ENCODE measurements at regions of chr4 and their contacts with region 1.

Region 1: DNA sequence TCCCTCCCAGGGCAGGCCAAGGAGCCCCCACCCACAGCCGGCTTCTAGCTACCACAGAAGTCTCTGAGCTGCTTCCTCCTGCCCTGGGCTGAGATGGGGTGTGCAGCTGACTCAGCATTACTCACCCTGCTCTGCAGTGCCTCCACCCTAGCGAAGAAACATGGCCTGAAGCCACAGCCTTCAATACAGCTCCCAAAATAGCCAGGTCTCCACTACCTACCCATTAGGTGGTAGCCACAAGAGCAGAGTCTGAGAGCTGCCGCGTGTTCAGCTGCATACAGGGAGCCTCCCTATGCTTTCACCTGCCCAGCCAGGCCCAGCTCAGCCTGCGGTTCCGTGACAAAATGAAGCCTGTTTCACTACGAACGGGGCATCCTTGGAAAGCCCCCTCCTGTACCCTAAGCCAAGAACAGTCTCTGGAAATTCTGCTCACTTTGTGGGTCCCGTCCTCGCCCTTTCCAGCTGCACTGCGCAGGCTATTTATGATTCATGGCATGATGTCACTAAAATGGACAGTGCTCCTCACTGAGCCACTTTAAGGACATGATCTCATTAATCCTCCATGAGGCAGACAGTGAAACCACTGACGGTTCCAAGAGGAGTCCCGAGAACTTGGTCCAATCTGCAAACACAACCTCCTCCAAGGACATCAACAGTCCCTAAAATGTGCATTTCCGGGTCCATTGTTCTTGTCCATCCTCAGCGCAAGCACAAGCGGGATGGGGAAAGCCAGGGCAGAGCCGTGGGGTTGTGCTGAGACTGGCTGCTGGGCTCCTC is 20.2 kb downstream of the WDR1 start:
- DNase-seq: peak; percentile 92
- ATAC-seq: peak; percentile 84
- H3K4me3 Mint-ChIP-seq: peak overlapping the region; percentile 7
- H3K27ac Mint-ChIP-seq: peak overlapping the region; percentile 92
- H3K4me1 Mint-ChIP-seq: peaks cover 97% of the 10 kb centered on the region
- H3K27me3 Mint-ChIP-seq: no peaks in the 10 kb centered on the region

Region 2: GRCh38 chr4:9691238-9692065 is 404.9 kb before region 1 on chr4:
- CTCF ChIA-PET with region 1: no interaction called
- POLR2A ChIA-PET with region 1: no interaction called
- intact Hi-C with region 1: loop called in 1 of 2 experiments (anchors 5 kb)
- DNase-seq: peak; percentile 95
- ATAC-seq: peak; percentile 100
- H3K4me3 Mint-ChIP-seq: peak overlapping the region; percentile 76
- H3K27ac Mint-ChIP-seq: peak overlapping the region; percentile 76
- H3K4me1 Mint-ChIP-seq: peaks cover 23% of the 10 kb centered on the region
- H3K27me3 Mint-ChIP-seq: no peaks in the 10 kb centered on the region

Region 3: DNA sequence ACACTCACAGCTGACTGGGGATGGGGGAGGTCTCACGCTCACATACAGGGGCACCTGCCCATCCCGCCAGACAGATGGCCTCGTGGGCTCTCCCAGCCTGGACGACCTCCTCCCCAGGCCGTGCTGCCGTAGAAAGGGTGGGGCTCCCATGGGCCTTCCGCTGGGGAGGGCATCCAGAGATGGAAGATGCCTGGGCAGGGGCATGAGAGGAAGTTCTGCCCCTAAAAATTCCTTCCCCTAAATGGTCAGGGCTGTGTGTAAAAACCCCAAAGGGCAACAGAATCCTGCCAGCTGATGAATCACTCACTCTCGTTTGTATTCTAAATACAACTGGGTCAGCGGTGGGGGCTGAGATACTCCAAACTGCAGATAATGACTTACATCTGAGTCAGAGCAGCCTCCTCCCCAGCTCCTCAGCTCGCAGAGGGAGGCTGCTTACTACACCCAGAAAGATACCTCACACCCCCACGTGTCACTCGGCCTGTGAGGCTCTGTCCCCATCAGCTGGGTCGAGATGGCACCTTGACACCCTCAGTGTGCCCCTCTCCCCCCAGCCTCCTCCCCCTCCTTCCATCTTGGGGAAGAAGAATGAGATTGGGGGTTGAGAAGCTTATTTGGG is 10.1 kb after region 1 on chr4:
- CTCF ChIA-PET with region 1: interaction called, 8 read pairs
- POLR2A ChIA-PET with region 1: interaction called, 9 read pairs
- intact Hi-C with region 1: loop called (anchors 1 kb)
- DNase-seq: peak; percentile 91
- ATAC-seq: peak; percentile 92
- H3K4me3 Mint-ChIP-seq: peak overlapping the region; percentile 67
- H3K27ac Mint-ChIP-seq: peak overlapping the region; percentile 87
- H3K4me1 Mint-ChIP-seq: peaks cover 99% of the 10 kb centered on the region
- H3K27me3 Mint-ChIP-seq: no peaks in the 10 kb centered on the region

Region 4: GRCh38 chr4:10180927-10181782 is 84.8 kb after region 1 on chr4:
- CTCF ChIA-PET with region 1: no interaction called
- POLR2A ChIA-PET with region 1: no interaction called
- intact Hi-C with region 1: loop called in 1 of 2 experiments (anchors 1 kb)
- DNase-seq: peak; percentile 62
- ATAC-seq: peak; percentile 97
- H3K4me3 Mint-ChIP-seq: peak overlapping the region; percentile 26
- H3K27ac Mint-ChIP-seq: peak overlapping the region; percentile 79
- H3K4me1 Mint-ChIP-seq: peaks cover 31% of the 10 kb centered on the region
- H3K27me3 Mint-ChIP-seq: no peaks in the 10 kb centered on the region

Measured in activated CD4-positive, alpha-beta T cell treated with anti-CD3 and anti-CD28 coated beads for 36 hours (primary cell).